ENCODE measurements at regions of chr11 and their contacts with region 1.

Region 1: DNA sequence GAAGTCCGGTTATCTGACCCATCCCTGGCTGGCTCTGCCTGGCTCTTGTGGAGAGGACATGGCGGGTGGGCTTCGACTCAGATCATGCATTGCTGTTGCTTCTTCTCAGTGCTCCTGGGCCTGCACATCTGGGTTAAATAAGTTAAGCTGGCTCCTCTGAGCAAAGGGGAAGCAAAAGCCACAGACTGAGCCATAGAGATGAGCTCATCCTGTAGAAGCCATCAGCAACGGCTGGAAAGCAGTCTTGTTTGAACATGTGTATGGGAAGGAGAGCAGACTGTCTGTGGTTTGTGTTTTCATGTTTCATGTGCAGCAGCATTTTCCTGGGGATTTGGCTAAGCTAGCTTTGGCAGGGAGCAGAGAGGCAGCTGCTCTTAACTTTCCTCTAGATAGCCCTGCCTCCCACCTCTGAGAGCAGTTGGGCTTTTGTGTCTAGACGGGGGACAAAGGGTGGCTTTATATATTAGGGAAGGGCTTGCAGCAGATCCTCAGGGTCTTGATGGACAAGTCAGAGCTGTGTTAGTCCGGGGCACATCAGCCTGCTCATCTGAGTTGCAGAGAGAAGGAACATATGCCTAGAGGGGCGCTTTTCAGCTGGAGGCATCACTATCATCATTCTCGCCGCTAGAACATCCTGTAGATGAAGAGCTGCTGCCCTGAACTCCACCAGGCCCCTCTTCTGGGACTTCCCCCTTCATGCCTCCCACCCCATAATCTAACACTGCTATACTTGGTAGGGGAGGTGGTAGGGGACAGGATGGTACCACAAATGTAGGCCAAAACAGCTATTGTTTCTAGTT is 14.9 kb downstream of the DCPS start:
- DNase-seq: peak; percentile 74
- H3K4me3 Mint-ChIP-seq: peak overlapping the region; percentile 59
- H3K27ac Mint-ChIP-seq: peak overlapping the region; percentile 84
- H3K4me1 Mint-ChIP-seq: peaks cover 33% of the 10 kb centered on the region
- H3K27me3 Mint-ChIP-seq: no peaks in the 10 kb centered on the region
- CTCF ChIP-seq: no peak

Region 2: DNA sequence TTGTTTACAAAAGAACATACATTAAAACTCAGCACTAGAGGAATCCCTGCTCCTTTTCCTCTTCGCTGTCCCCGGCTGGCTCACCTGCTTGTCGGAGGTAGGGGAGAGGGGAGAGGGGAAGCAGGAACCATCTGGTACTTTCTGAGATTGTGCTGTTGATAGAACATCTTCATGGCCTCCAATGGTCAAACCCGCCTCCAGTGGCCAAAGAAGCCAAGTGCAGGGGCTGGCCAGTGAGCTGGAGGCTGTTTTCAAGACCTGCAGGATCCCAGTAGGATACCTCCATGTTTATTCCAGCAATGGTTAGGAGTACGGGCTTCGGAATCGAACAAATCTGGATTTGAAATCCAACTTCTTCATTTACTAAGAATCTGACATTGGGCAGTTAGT is 1061.6 kb before region 1 on chr11:
- CTCF ChIA-PET with region 1: no interaction called
- POLR2A ChIA-PET with region 1: no interaction called
- intact Hi-C with region 1: no loop called
- DNase-seq: no peak
- H3K4me3 Mint-ChIP-seq: no peak overlapping the region
- H3K27ac Mint-ChIP-seq: no peak overlapping the region
- H3K4me1 Mint-ChIP-seq: no peaks in the 10 kb centered on the region
- H3K27me3 Mint-ChIP-seq: peaks cover 8% of the 10 kb centered on the region
- CTCF ChIP-seq: no peak

Region 3: GRCh38 chr11:126140932-126141291 is 177.9 kb before region 1 on chr11:
- CTCF ChIA-PET with region 1: no interaction called
- POLR2A ChIA-PET with region 1: no interaction called
- intact Hi-C with region 1: no loop called
- DNase-seq: peak; percentile 33
- H3K4me3 Mint-ChIP-seq: no peak overlapping the region
- H3K27ac Mint-ChIP-seq: no peak overlapping the region
- H3K4me1 Mint-ChIP-seq: peaks cover 7% of the 10 kb centered on the region
- H3K27me3 Mint-ChIP-seq: peaks cover 10% of the 10 kb centered on the region
- CTCF ChIP-seq: no peak

Region 4: GRCh38 chr11:126152586-126152985 is 166.2 kb before region 1 on chr11:
- CTCF ChIA-PET with region 1: no interaction called
- POLR2A ChIA-PET with region 1: no interaction called
- intact Hi-C with region 1: no loop called
- DNase-seq: no peak
- H3K4me3 Mint-ChIP-seq: no peak overlapping the region
- H3K27ac Mint-ChIP-seq: no peak overlapping the region
- H3K4me1 Mint-ChIP-seq: no peaks in the 10 kb centered on the region
- H3K27me3 Mint-ChIP-seq: peaks cover 13% of the 10 kb centered on the region
- CTCF ChIP-seq: no peak

Region 5: DNA sequence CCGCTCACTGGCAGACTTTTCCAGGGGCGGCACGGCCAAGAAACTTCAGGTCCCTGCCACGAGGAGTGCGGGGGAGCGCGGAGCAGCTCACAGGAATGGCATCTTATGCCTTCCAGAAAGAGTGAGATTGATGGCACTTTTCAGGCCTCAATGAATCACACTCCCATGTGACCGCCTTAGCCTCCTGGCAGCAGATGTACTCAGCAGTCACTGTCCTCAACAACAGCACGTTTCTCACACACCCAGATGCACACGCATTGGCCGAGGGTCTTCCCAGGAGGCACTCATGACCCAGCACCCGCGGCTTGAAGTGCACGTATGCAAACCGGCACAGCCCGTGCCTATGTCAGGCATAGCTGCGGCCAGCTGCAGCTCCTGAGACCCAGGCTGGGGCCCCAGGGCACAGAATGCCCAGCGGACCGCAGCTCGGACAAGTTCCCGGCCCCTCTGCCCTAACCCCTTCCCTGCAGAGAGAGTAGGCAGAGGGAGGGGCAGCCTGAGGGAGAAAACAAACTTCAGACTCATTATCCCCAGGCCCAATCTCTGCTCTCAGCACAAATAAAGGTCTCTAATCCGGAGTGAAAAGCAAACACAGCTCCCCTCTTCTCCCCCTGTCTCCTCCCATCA is 155.6 kb before region 1 on chr11:
- CTCF ChIA-PET with region 1: no interaction called
- POLR2A ChIA-PET with region 1: no interaction called
- intact Hi-C with region 1: no loop called
- DNase-seq: peak; percentile 57
- H3K4me3 Mint-ChIP-seq: no peak overlapping the region
- H3K27ac Mint-ChIP-seq: peak overlapping the region; percentile 28
- H3K4me1 Mint-ChIP-seq: peaks cover 8% of the 10 kb centered on the region
- H3K27me3 Mint-ChIP-seq: no peaks in the 10 kb centered on the region
- CTCF ChIP-seq: no peak

Region 6: DNA sequence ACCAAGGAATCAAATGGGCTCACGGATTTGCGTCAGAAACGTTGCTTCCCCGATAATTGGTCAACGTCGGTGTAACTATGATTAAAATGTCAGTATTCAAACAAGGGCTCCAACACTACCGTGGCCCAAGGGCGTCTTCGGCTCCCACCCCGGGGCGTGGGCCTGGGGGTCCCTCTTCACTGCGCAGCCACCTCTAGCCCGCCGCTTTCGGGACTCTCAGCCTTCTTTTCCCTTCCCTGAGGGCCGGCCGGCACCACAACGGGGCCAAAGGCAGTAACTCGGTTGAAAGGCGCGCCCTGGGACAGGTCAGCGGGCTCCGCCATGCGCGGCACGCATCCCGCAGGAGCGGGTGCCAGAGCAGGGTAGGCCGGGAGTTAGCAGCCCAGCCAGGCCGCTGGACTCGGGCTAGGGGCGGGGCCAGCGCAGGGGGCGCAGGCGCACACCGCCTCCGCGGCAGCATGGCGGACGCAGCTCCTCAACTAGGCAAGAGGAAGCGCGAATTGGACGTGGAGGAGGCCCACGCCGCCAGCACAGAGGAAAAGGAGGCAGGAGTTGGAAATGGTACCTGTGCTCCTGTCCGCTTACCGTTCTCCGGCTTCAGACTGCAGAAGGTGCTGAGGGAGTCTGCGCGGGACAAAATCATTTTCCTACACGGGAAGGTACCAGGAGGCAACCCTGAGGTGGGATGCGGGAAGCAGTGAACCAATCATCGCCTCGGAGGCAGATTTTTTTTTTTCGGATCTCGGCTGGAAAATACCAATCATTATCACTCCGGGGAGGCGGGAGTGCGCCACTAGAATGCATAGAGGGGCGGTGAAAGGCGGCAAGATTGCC is 14.9 kb before region 1 on chr11 and contains the start of gene DCPS:
- CTCF ChIA-PET with region 1: interaction called, 33 read pairs
- POLR2A ChIA-PET with region 1: interaction called, 14 read pairs
- intact Hi-C with region 1: no loop called
- DNase-seq: peak; percentile 88
- H3K4me3 Mint-ChIP-seq: peak within 1 kb of the TSS; percentile 89
- H3K27ac Mint-ChIP-seq: peak within 1 kb of the TSS; percentile 79
- H3K4me1 Mint-ChIP-seq: peaks cover 6% of the 10 kb centered on the region
- H3K27me3 Mint-ChIP-seq: no peaks in the 10 kb centered on the region
- CTCF ChIP-seq: no peak
- total RNA-seq, gene DCPS: 29.6 and 33.7 TPM in 2 replicates

Region 7: GRCh38 chr11:126431401-126432064 is 112.8 kb after region 1 on chr11:
- CTCF ChIA-PET with region 1: interaction called, 3 read pairs
- POLR2A ChIA-PET with region 1: no interaction called
- intact Hi-C with region 1: loop called (anchors 2 kb)
- DNase-seq: peak; percentile 79
- H3K4me3 Mint-ChIP-seq: no peak overlapping the region
- H3K27ac Mint-ChIP-seq: peak overlapping the region; percentile 98
- H3K4me1 Mint-ChIP-seq: peaks cover 14% of the 10 kb centered on the region
- H3K27me3 Mint-ChIP-seq: no peaks in the 10 kb centered on the region
- CTCF ChIP-seq: no peak